ENCODE measurements at regions of chr2 and their contacts with region 1.

Region 1: DNA sequence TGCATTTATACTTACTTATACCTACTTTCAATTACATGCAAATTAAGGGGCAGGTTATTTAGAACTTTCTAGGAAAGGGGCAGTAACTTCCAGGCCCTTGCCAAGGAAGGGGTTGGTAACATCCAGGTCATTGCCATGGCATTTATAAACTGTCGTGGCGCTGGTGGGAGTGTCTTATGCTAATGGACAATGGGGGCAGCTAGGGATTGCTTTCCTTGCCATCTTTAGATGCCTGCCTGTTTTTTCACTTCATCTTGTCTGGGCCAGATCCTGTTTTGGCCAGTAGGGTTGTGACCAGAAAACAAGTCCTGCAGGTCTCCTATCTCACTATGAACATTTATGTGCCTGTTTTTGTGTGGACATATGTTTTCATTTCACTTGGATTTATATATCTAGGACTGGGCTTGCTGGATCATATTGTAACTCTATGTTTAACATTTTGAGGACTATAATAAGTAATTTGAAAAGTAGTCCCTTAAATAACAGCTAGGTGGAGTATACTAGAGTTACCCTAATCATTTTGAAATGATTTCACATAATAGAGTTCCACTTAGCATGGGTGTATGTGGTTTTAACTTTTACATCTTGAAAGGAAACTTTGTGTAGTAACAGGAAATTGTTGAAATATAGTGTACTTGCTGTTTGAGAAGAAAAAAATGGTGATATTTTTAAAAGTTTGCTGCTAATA is 56.1 kb downstream of the LCLAT1 start:
- DNase-seq: no peak
- ATAC-seq: peak; percentile 66
- H3K4me3 ChIP-seq: no peak overlapping the region
- H3K27ac ChIP-seq: no peak overlapping the region
- H3K4me1 ChIP-seq: peaks cover 5% of the 10 kb centered on the region
- H3K27me3 ChIP-seq: no peaks in the 10 kb centered on the region
- CTCF ChIP-seq: no peak
- EP300 ChIP-seq: no peak
- POLR2A ChIP-seq: no peak
- RAD21 ChIP-seq: no peak; the same call in 1 of the 2 replicates

Region 2: GRCh38 chr2:28821295-28821958 is 1681.7 kb before region 1 on chr2:
- CTCF ChIA-PET with region 1: no interaction called
- POLR2A ChIA-PET with region 1: interaction called, 10 read pairs
- RAD21 ChIA-PET with region 1: no interaction called
- SMC1A ChIA-PET with region 1: no interaction called
- in situ Hi-C with region 1: no loop called
- intact Hi-C with region 1: no loop called
- DNase-seq: peak; percentile 25
- ATAC-seq: peak; percentile 89
- H3K4me3 ChIP-seq: no peak overlapping the region
- H3K27ac ChIP-seq: no peak overlapping the region
- H3K4me1 ChIP-seq: no peaks in the 10 kb centered on the region
- H3K27me3 ChIP-seq: no peaks in the 10 kb centered on the region
- CTCF ChIP-seq: peak; percentile 65 to 75 (median 67)
- EP300 ChIP-seq: no peak
- POLR2A ChIP-seq: no peak
- RAD21 ChIP-seq: peak; percentile 79

Region 3: GRCh38 chr2:29881089-29881733 is 621.9 kb before region 1 on chr2:
- CTCF ChIA-PET with region 1: no interaction called
- POLR2A ChIA-PET with region 1: no interaction called
- RAD21 ChIA-PET with region 1: no interaction called
- SMC1A ChIA-PET with region 1: no interaction called
- in situ Hi-C with region 1: no loop called
- intact Hi-C with region 1: no loop called
- DNase-seq: no peak
- ATAC-seq: no peak
- H3K4me3 ChIP-seq: no peak overlapping the region
- H3K27ac ChIP-seq: no peak overlapping the region
- H3K4me1 ChIP-seq: no peaks in the 10 kb centered on the region
- H3K27me3 ChIP-seq: 0 out of 4 replicates have a peak, but pooled peaks cover 0 to 2% of the 10 kb centered on the region in 2 experiments
- CTCF ChIP-seq: no peak
- EP300 ChIP-seq: no peak
- POLR2A ChIP-seq: no peak
- RAD21 ChIP-seq: no peak

Region 4: DNA sequence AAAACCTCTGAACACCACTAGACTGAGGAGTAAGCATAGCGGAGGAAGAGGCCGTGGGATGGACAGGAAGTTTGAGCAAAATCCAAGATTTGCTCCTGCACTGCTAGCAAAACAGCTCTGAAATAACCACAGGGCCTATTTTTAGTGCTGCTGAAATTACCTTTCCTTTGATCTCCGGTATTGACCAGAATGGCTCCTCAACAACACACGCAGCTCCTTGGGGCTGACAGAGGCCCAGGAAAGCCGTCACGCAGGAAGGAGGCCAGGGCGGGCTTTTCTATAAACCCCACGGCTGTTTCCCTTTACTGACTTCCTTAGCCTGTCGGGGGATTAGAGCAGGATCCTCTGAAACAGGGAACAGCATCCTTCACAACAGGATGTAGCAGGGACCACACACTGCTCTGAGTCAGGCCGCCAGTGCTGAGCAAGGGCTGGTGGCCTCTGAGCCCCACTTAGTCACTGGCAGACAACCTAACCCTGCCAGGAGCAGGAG is 136.9 kb before region 1 on chr2:
- CTCF ChIA-PET with region 1: no interaction called
- POLR2A ChIA-PET with region 1: no interaction called
- RAD21 ChIA-PET with region 1: no interaction called
- SMC1A ChIA-PET with region 1: no interaction called
- in situ Hi-C with region 1: no loop called
- intact Hi-C with region 1: no loop called
- DNase-seq: no peak
- ATAC-seq: peak; percentile 56
- H3K4me3 ChIP-seq: no peak overlapping the region
- H3K27ac ChIP-seq: no peak overlapping the region
- H3K4me1 ChIP-seq: peaks cover 8% of the 10 kb centered on the region
- H3K27me3 ChIP-seq: no peaks in the 10 kb centered on the region
- CTCF ChIP-seq: no peak
- EP300 ChIP-seq: no peak
- POLR2A ChIP-seq: no peak
- RAD21 ChIP-seq: no peak

Region 5: DNA sequence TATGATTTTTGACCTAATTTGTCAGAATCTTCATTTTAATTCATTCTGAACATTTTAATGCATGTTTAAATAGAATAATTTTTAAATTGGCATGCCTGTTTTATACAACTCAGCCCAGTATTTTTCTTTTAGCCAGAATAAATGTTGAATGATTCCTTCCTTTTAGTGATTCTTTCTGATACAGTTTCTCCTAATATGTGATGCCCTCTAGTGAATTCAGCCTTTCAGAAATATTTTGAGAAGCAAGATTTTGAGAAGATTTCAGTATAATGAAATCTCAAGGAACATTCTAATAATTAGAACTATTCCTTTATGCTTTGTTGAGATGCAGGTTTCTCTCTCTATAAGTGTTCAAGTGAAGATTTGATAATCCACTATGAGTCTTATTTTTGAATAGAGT is 27.6 kb before region 1 on chr2:
- CTCF ChIA-PET with region 1: interaction called, 4 read pairs
- POLR2A ChIA-PET with region 1: interaction called, 3 read pairs
- RAD21 ChIA-PET with region 1: interaction called, 8 read pairs
- SMC1A ChIA-PET with region 1: interaction called, 15 read pairs
- in situ Hi-C with region 1: no loop called
- intact Hi-C with region 1: no loop called
- DNase-seq: no peak
- ATAC-seq: no peak
- H3K4me3 ChIP-seq: no peak overlapping the region
- H3K27ac ChIP-seq: no peak overlapping the region
- H3K4me1 ChIP-seq: peaks cover 3% of the 10 kb centered on the region; the same call in 1 of the 2 replicates
- H3K27me3 ChIP-seq: no peaks in the 10 kb centered on the region
- CTCF ChIP-seq: no peak; a peak in 1 of 6 replicates
- EP300 ChIP-seq: no peak
- POLR2A ChIP-seq: no peak
- RAD21 ChIP-seq: peak; percentile 35

Region 6: GRCh38 chr2:30492185-30492584 is 11.0 kb before region 1 on chr2:
- CTCF ChIA-PET with region 1: interaction called, 9 read pairs
- POLR2A ChIA-PET with region 1: interaction called, 7 read pairs
- RAD21 ChIA-PET with region 1: interaction called, 5 read pairs
- SMC1A ChIA-PET with region 1: interaction called, 41 read pairs
- in situ Hi-C with region 1: no loop called
- intact Hi-C with region 1: no loop called
- DNase-seq: no peak
- ATAC-seq: no peak
- H3K4me3 ChIP-seq: no peak overlapping the region
- H3K27ac ChIP-seq: no peak overlapping the region
- H3K4me1 ChIP-seq: no peaks in the 10 kb centered on the region; the same call in 1 of the 2 replicates
- H3K27me3 ChIP-seq: no peaks in the 10 kb centered on the region
- CTCF ChIP-seq: no peak
- EP300 ChIP-seq: no peak
- POLR2A ChIP-seq: no peak
- RAD21 ChIP-seq: no peak

Region 7: GRCh38 chr2:30514848-30515435 is 11.8 kb after region 1 on chr2:
- CTCF ChIA-PET with region 1: interaction called, 3 read pairs
- POLR2A ChIA-PET with region 1: interaction called, 4 read pairs
- RAD21 ChIA-PET with region 1: interaction called, 6 read pairs
- SMC1A ChIA-PET with region 1: interaction called, 16 read pairs
- in situ Hi-C with region 1: no loop called
- intact Hi-C with region 1: no loop called
- DNase-seq: no peak
- ATAC-seq: peak; percentile 48
- H3K4me3 ChIP-seq: no peak overlapping the region
- H3K27ac ChIP-seq: peak overlapping the region; percentile 56; the same call in 1 of the 2 replicates
- H3K4me1 ChIP-seq: peaks cover 8% of the 10 kb centered on the region; the same call in 1 of the 2 replicates
- H3K27me3 ChIP-seq: no peaks in the 10 kb centered on the region
- CTCF ChIP-seq: no peak
- EP300 ChIP-seq: no peak
- POLR2A ChIP-seq: no peak
- RAD21 ChIP-seq: no peak

Region 8: DNA sequence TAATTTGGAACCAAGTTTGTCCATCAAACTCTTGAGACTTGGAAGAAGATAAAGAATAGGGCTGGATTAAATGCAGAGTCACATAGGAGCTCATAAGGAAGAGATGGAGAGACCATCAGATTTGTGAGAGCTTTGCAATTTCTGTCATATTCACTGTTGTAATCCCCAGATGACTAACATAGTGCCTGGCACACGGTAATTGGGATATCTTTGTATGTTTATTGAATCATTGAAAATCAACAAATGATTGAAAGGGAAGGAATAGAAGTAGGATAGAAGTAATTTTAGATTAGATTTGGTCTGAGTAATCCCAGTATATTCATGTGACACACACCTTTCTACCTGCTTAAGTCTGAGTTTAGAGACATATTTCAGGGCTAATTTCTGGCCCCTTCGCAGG is 19.3 kb after region 1 on chr2:
- CTCF ChIA-PET with region 1: interaction called, 7 read pairs
- POLR2A ChIA-PET with region 1: no interaction called
- RAD21 ChIA-PET with region 1: interaction called, 3 read pairs
- SMC1A ChIA-PET with region 1: interaction called, 16 read pairs
- in situ Hi-C with region 1: no loop called
- intact Hi-C with region 1: no loop called
- DNase-seq: no peak
- ATAC-seq: no peak
- H3K4me3 ChIP-seq: no peak overlapping the region
- H3K27ac ChIP-seq: no peak overlapping the region
- H3K4me1 ChIP-seq: no peaks in the 10 kb centered on the region
- H3K27me3 ChIP-seq: no peaks in the 10 kb centered on the region
- CTCF ChIP-seq: no peak
- EP300 ChIP-seq: no peak
- POLR2A ChIP-seq: no peak
- RAD21 ChIP-seq: no peak

Region 9: DNA sequence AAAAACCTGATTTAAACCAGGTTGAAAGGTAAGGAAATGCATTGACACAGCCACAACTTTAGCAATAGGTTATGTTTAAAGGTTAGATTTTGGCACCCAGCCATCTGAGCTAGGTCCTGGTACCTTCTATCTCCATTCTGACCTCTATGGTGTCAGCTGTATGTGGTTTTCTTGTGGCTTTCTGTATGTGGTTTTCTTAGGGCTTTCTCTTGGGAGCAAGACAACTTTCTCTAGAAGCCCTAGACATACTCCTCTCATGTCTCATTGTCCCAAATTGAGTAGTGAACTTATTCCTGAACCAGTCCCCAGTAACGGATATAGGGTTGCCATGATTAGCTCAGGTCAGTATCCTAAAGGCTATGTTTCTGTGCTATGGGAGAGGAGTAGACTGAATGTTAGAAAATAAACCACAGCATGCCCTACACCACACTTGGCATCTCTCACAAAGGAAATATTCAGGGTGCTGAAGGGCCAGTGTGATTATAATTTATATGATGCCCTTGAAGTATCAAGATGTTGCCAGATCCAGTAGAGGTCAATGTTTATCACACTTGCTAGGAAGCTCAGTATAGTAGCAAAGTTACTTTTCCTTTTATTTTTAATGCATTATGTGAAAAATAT is 128.0 kb after region 1 on chr2:
- CTCF ChIA-PET with region 1: no interaction called
- POLR2A ChIA-PET with region 1: no interaction called
- RAD21 ChIA-PET with region 1: interaction called, 4 read pairs
- SMC1A ChIA-PET with region 1: interaction called, 4 read pairs
- in situ Hi-C with region 1: no loop called
- intact Hi-C with region 1: loop called (anchors 10 kb)
- DNase-seq: peak; percentile 48
- ATAC-seq: peak; percentile 56
- H3K4me3 ChIP-seq: no peak overlapping the region
- H3K27ac ChIP-seq: no peak overlapping the region
- H3K4me1 ChIP-seq: peaks cover 25% of the 10 kb centered on the region
- H3K27me3 ChIP-seq: no peaks in the 10 kb centered on the region
- CTCF ChIP-seq: no peak
- EP300 ChIP-seq: no peak
- POLR2A ChIP-seq: no peak
- RAD21 ChIP-seq: no peak

Region 10: DNA sequence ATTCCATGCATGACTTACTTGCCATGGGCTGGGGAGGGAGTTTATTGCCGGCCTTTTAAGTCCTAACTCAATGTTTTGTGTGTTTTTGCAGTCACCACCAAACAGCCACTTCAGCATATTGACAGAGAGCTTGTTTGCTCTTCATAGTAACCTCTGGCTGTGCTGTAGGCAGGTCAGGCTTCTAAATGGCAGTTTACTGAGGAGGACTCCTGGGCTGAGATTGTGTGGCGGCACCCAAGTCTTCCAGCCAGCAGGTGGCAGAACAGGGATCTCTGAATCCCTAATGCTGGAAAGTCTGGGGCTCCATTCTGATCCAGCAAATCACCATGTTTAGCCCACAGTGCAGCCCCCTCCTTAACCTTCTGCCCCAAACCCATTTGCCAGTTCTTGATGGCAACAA is 182.8 kb after region 1 on chr2:
- CTCF ChIA-PET with region 1: no interaction called
- POLR2A ChIA-PET with region 1: no interaction called
- RAD21 ChIA-PET with region 1: no interaction called
- SMC1A ChIA-PET with region 1: no interaction called
- in situ Hi-C with region 1: no loop called
- intact Hi-C with region 1: no loop called
- DNase-seq: no peak
- ATAC-seq: peak; percentile 61
- H3K4me3 ChIP-seq: no peak overlapping the region
- H3K27ac ChIP-seq: no peak overlapping the region
- H3K4me1 ChIP-seq: no peaks in the 10 kb centered on the region
- H3K27me3 ChIP-seq: no peaks in the 10 kb centered on the region
- CTCF ChIP-seq: peak; percentile 30 to 35 (median 33); a peak in 5 of 6 replicates
- EP300 ChIP-seq: no peak
- POLR2A ChIP-seq: no peak
- RAD21 ChIP-seq: no peak

Region 11: DNA sequence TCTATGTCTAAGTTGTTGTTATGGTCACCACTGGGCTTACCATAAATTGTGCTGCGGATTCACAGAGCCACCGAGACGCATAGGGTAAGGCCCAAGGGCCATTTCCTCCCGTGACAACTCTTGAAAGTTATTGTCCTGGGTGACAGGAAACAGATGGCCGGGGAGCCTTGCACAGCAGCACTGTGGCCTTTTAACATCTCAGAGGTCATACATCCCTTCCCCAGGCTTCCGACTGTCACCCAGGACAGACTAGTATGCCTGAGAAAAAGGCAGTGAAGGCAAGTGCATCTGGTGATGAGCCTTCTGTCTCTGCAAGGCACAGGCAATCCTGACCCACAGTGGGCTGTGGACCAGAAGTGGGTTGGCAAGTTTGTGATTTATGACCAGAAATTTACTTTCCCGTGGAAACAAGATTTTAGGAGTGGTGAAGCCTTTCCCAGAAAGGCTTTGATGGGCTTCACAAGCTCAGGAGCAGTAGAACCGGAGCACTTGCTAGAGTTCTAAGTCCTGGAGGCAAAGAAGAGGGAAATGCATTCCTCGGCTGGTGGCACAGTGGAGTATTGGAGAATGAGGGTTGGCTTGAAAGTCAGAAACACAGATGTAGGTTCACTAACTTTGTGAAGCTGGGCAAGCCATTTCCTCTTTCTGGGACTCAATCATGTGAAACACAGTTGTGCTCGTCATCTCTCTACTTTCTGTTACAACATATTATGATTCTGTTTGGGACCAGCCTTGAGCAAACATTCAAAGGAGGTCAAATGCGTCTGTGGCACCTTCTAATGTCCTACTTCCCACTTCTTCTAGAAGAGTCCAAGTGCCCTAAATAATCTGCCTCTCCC is 716.2 kb after region 1 on chr2:
- CTCF ChIA-PET with region 1: no interaction called
- POLR2A ChIA-PET with region 1: no interaction called
- RAD21 ChIA-PET with region 1: no interaction called
- SMC1A ChIA-PET with region 1: no interaction called
- in situ Hi-C with region 1: no loop called
- intact Hi-C with region 1: no loop called
- DNase-seq: peak; percentile 79
- ATAC-seq: peak; percentile 80
- H3K4me3 ChIP-seq: 0 out of 2 replicates have a peak overlapping the region, but pooled peaks have one; percentile 2
- H3K27ac ChIP-seq: peak overlapping the region; percentile 52
- H3K4me1 ChIP-seq: peaks cover 50% of the 10 kb centered on the region
- H3K27me3 ChIP-seq: no peaks in the 10 kb centered on the region
- CTCF ChIP-seq: no peak
- EP300 ChIP-seq: peak; percentile 28 to 48; a peak in 3 of 4 replicates
- POLR2A ChIP-seq: no peak
- RAD21 ChIP-seq: no peak